ENCODE measurements at regions of chr16 and their contacts with region 1.

Region 1: GRCh38 chr16:3059000-3059722 is 6.3 kb upstream of the IL32 start:
- DNase-seq: peak; percentile 85
- H3K4me3 Mint-ChIP-seq: peak overlapping the region; percentile 89
- H3K27ac Mint-ChIP-seq: peak overlapping the region; percentile 91
- H3K4me1 Mint-ChIP-seq: peaks cover 48% of the 10 kb centered on the region
- H3K27me3 Mint-ChIP-seq: no peaks in the 10 kb centered on the region

Region 2: GRCh38 chr16:3029537-3030402 is 29.4 kb before region 1 on chr16:
- CTCF ChIA-PET with region 1: interaction called, 17 read pairs
- intact Hi-C with region 1: loop called (anchors 5 kb)
- DNase-seq: peak; percentile 52
- H3K4me3 Mint-ChIP-seq: peak overlapping the region; percentile 14
- H3K27ac Mint-ChIP-seq: no peak overlapping the region
- H3K4me1 Mint-ChIP-seq: peaks cover 20% of the 10 kb centered on the region
- H3K27me3 Mint-ChIP-seq: peaks cover 39% of the 10 kb centered on the region

Region 3: GRCh38 chr16:3074860-3075522 is 15.8 kb after region 1 on chr16:
- CTCF ChIA-PET with region 1: interaction called, 38 read pairs
- intact Hi-C with region 1: loop called (anchors 1 kb)
- DNase-seq: peak; percentile 94
- H3K4me3 Mint-ChIP-seq: peak overlapping the region; percentile 71
- H3K27ac Mint-ChIP-seq: peak overlapping the region; percentile 98
- H3K4me1 Mint-ChIP-seq: peaks cover 77% of the 10 kb centered on the region
- H3K27me3 Mint-ChIP-seq: no peaks in the 10 kb centered on the region

Region 4: GRCh38 chr16:3094289-3095027 is 35.3 kb after region 1 on chr16:
- CTCF ChIA-PET with region 1: interaction called, 13 read pairs
- intact Hi-C with region 1: no loop called
- DNase-seq: peak; percentile 80
- H3K4me3 Mint-ChIP-seq: no peak overlapping the region
- H3K27ac Mint-ChIP-seq: no peak overlapping the region
- H3K4me1 Mint-ChIP-seq: peaks cover 23% of the 10 kb centered on the region
- H3K27me3 Mint-ChIP-seq: no peaks in the 10 kb centered on the region

Region 5: DNA sequence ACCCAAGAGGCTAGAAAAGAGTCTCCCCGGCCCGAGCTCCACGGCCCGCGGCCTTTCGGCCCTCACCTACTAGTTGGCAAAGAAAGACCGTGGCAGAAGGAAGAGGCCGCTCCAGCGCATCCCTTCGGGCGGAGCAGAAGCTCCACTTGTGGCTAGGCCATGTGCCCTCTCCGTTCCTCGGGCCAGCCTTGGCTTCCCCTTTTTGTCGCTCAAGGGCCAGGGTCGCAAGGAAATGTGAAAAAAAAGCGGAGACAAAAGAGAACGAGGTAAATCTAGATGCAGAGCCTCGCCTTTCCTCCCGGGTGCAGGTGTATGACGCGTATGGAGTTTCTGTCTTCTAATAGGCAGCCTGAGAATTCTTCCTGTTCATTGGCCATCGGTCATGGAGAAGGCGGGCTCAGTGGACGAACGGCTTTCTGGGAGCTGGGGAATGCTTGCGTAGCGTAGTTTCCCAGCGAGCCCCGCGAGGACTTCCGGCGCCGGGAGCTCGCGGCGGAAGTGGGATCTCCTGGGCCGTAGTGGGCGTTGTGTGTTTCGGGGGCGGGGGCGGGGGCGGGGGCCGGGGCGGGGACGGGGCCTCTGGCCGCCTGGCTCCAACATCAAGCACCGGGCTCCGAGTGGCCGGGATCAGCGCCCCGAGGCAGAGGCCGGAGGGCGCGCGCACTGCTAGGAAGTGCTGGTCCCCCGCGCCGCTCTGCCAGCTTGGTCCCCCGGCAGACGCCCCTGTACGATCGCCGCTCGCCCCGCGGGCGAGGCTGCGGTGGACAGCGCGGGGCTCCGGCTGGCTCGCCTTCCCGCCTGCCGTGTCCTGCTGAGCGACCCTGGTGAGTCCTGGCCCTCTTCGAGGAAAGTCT is 75.6 kb after region 1 on chr16 and contains the start of gene ZNF213:
- CTCF ChIA-PET with region 1: interaction called, 187 read pairs
- intact Hi-C with region 1: loop called (anchors 1 kb)
- DNase-seq: peak; percentile 97
- H3K4me3 Mint-ChIP-seq: peak within 1 kb of the TSS; percentile 99
- H3K27ac Mint-ChIP-seq: peak within 1 kb of the TSS; percentile 91
- H3K4me1 Mint-ChIP-seq: peaks cover 29% of the 10 kb centered on the region
- H3K27me3 Mint-ChIP-seq: no peaks in the 10 kb centered on the region
- total RNA-seq, gene ZNF213: 6.1 to 6.5 TPM

Region 6: DNA sequence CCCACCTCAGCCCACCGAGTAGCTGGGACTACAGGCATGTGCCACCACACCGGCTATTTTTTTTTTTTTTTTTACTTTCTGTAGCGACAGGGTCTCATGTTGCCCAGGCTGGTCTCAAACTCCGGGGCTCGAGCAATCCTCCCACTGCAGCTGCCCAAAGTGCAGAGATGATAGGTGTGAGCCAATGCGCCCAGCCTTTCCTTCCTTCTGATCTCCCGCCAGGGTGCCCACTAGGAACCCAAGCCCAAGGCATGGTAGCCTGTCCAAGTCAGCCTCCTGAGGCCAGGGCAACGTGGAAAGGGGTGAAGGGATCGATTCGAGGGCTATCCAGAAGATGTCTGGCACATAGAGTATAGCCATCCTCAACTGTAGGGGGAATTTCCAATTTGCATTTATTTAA is 830.9 kb after region 1 on chr16:
- CTCF ChIA-PET with region 1: no interaction called
- intact Hi-C with region 1: no loop called
- DNase-seq: no peak
- H3K4me3 Mint-ChIP-seq: no peak overlapping the region
- H3K27ac Mint-ChIP-seq: no peak overlapping the region
- H3K4me1 Mint-ChIP-seq: no peaks in the 10 kb centered on the region
- H3K27me3 Mint-ChIP-seq: peaks cover 1% of the 10 kb centered on the region

Measured in activated naive CD4-positive, alpha-beta T cell treated with anti-CD3 and anti-CD28 coated beads for 36 hours (primary cell).